Panc1 (cell line): ENCODE measurements at regions of chr2 and their contacts with region 1.

Region 1: GRCh38 chr2:234881413-234882241 is 70.2 kb upstream of the SH3BP4 start:
- DNase-seq: peak; percentile 87
- ATAC-seq: peak; percentile 89
- H3K4me3 ChIP-seq: 0 out of 4 replicates have a peak overlapping the region, but pooled peaks of 1 of the 2 experiments have one; percentile 10
- H3K27ac ChIP-seq: peak overlapping the region; percentile 93
- H3K4me1 ChIP-seq: peaks cover 36% of the 10 kb centered on the region
- H3K27me3 ChIP-seq: no peaks in the 10 kb centered on the region
- CTCF ChIP-seq: peak; percentile 88

Region 2: DNA sequence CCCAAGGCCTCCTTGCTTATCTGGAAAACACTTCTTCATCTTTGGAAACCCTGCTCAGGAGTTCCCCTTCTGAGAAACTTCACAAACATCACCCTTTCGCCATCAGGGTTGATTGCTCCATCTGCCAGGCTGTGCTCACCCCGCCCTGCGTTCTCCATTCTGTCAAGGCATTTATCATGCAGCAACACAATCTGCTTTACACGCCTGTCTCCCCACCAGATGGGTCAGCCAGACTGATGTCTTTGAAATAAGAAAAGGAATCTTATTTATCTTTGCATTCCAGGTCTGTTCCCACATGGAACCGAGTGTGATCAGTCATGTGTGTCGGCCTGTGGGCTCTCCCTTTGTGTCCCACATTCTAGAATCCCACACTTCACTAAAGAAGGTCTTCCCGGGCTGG is 274.7 kb before region 1 on chr2:
- CTCF ChIA-PET with region 1: interaction called, 13 read pairs
- POLR2A ChIA-PET with region 1: no interaction called
- in situ Hi-C with region 1: no loop called
- intact Hi-C with region 1: no loop called
- DNase-seq: no peak
- ATAC-seq: no peak
- H3K4me3 ChIP-seq: no peak overlapping the region
- H3K27ac ChIP-seq: no peak overlapping the region
- H3K4me1 ChIP-seq: no peaks in the 10 kb centered on the region
- H3K27me3 ChIP-seq: no peaks in the 10 kb centered on the region
- CTCF ChIP-seq: no peak

Region 3: GRCh38 chr2:234898654-234899053 is 17.0 kb after region 1 on chr2:
- CTCF ChIA-PET with region 1: no interaction called
- POLR2A ChIA-PET with region 1: no interaction called
- in situ Hi-C with region 1: no loop called
- intact Hi-C with region 1: no loop called
- DNase-seq: no peak
- ATAC-seq: no peak
- H3K4me3 ChIP-seq: no peak overlapping the region
- H3K27ac ChIP-seq: no peak overlapping the region
- H3K4me1 ChIP-seq: no peaks in the 10 kb centered on the region
- H3K27me3 ChIP-seq: no peaks in the 10 kb centered on the region
- CTCF ChIP-seq: no peak

Region 4: DNA sequence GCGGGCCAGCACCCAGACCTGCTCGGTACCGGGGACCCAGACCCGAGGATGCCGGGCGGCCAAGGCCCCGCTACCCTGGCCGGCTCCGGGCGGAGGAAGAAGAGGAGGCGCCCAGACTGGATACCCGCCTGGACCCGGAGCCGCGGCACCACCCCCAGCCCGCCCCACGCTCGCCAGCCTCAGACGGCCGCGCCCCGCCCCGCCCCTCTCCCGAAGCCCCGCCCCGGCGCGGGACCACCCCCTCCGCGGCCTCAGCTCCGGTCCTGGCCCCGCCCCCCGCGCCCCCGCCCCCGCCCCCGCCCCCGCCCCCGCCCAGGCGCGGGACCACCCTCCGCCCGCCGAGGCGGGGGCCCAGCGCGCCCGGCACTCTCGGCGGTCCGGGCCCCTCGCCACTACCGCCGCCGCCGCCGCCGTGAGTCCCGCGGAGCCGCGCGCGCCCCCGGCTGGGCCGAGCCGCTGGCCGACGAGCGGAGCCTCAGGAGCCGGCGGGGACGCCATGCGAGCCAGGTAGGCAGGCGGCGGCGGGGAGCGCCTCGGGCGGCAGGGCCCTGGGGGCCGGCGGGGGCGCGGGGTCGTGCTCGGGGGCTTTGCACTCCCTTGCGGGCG is 70.1 kb after region 1 on chr2 and contains the start of gene SH3BP4:
- CTCF ChIA-PET with region 1: interaction called, 8 read pairs
- POLR2A ChIA-PET with region 1: interaction called, 10 read pairs
- in situ Hi-C with region 1: no loop called
- intact Hi-C with region 1: loop called (anchors 5 kb)
- DNase-seq: no peak
- ATAC-seq: peak; percentile 84
- H3K4me3 ChIP-seq: peak within 1 kb of the TSS; percentile 64 to 92
- H3K27ac ChIP-seq: peak within 1 kb of the TSS; percentile 99
- H3K4me1 ChIP-seq: peaks cover 39% of the 10 kb centered on the region
- H3K27me3 ChIP-seq: no peaks in the 10 kb centered on the region
- CTCF ChIP-seq: no peak; the same call in 1 of the 2 replicates
- total RNA-seq, gene SH3BP4: 133 TPM

Region 5: DNA sequence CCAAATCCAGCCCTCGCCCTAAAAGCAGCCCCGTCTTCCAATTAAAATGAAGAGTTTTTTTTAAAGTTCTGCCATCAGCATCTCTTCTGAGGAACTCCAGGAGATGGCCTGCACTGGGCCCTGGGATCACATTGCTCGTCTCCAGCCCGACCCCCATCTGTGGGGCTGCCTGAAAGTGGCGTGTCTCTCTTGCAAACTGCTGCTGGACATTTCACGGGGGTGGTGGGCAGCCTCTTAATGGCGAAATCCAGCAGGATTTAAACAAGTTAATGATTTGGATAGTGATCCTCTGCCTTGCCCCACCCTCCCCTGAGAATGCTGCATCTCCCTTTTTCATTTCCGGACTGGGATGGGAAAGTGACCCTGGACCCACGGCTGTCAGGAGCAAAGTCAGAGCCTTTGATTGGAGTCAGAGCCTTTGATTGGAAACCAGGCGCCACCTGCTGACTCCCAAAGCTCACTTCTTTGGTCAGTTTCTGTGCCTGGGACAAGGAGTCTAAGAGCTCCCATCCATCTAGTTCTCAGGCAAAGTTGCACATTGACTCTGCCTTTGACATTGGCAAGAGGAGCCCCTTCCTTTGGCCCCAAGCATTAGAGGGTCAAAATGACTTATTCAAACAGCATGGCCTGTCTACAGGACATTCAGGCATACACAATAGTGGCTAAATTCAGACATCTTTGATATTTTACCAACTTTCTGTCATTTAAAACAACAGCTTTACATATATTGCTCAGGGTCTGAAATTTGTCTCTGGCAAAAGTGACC is 225.4 kb after region 1 on chr2:
- CTCF ChIA-PET with region 1: interaction called, 6 read pairs
- POLR2A ChIA-PET with region 1: no interaction called
- in situ Hi-C with region 1: no loop called
- intact Hi-C with region 1: loop called (anchors 5 kb)
- DNase-seq: peak; percentile 27
- ATAC-seq: peak; percentile 95
- H3K4me3 ChIP-seq: no peak overlapping the region
- H3K27ac ChIP-seq: peak overlapping the region; percentile 59
- H3K4me1 ChIP-seq: peaks cover 10% of the 10 kb centered on the region
- H3K27me3 ChIP-seq: no peaks in the 10 kb centered on the region
- CTCF ChIP-seq: peak; percentile 86